ENCODE measurements at regions of chr1 and their contacts with region 1.

Region 1: GRCh38 chr1:66446261-66447001 is 87.5 kb upstream of the SGIP1 start:
- DNase-seq: peak; percentile 72
- H3K4me3 Mint-ChIP-seq: peak overlapping the region; percentile 17
- H3K27ac Mint-ChIP-seq: peak overlapping the region; percentile 95
- H3K4me1 Mint-ChIP-seq: peaks cover 30% of the 10 kb centered on the region
- H3K27me3 Mint-ChIP-seq: peaks cover 13% of the 10 kb centered on the region

Region 2: DNA sequence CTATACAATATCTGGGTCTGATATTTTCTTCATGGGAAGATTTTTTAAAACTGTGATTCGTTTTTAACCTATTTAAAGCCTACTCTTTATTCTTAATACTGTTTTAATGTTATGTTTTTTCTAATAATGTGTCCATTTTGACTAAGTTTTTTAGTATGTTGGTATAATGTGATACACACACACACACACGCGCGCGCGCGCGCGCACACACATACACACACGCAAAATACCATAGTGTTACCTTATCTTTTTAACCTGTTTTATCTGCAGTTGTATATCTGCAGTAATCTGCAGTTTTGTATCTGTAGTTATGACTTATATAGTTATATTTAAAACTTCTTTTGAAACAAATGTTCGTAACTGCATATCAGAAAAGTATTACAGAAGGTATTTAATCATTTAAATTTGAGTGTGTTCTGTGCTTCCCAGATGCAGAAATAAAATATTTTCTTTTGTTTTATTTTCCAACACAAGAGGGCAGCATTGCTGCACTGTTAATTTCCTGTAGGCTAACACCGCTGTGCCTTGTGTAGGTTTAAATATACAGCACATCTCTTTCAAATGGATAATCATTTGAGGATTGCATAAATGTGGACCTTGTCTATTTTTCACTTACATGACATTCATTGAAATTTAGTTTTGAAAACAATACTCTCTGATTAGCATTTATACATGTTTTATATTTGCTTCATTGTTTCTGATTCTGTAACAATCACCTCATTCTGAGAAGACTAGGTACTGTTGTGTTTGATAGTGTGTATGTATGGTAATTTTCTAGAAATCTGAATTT is 487.7 kb before region 1 on chr1:
- CTCF ChIA-PET with region 1: interaction called, 27 read pairs
- POLR2A ChIA-PET with region 1: no interaction called
- DNase-seq: peak; percentile 51
- H3K4me3 Mint-ChIP-seq: no peak overlapping the region
- H3K27ac Mint-ChIP-seq: no peak overlapping the region
- H3K4me1 Mint-ChIP-seq: peaks cover 6% of the 10 kb centered on the region
- H3K27me3 Mint-ChIP-seq: peaks cover 4% of the 10 kb centered on the region

Region 3: DNA sequence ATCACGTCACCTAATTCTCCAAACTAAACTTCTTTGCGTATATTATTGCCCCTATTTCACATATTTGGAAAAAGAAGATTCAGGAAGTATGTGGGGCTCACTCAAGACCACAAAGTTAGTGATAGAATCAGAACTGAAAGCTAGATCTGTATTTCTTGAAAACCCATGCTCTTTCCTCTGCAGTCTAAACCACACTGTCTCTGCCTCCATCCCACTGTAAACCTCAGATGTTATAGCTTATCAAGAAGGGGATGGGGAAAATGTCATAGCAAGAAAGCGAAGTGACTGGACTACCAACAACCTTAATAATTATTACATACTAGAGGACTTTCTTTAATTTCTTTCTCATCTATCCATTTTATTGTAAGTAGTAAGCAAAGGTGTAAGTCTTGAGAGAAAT is 170.2 kb before region 1 on chr1:
- CTCF ChIA-PET with region 1: interaction called, 21 read pairs
- POLR2A ChIA-PET with region 1: interaction called, 4 read pairs
- DNase-seq: peak; percentile 56
- H3K4me3 Mint-ChIP-seq: peak overlapping the region; percentile 64
- H3K27ac Mint-ChIP-seq: peak overlapping the region; percentile 88
- H3K4me1 Mint-ChIP-seq: peaks cover 94% of the 10 kb centered on the region
- H3K27me3 Mint-ChIP-seq: no peaks in the 10 kb centered on the region